Mammary epithelial cell (primary cell): ENCODE measurements at regions of chr11 and their contacts with region 1.

Region 1: GRCh38 chr11:120248551-120249278 is 8.8 kb downstream of the POU2F3 start:
- DNase-seq: peak; percentile 73
- H3K4me3 ChIP-seq: no peak overlapping the region
- H3K27ac ChIP-seq: no peak overlapping the region
- H3K4me1 ChIP-seq: peaks cover 14% of the 10 kb centered on the region
- H3K27me3 ChIP-seq: no peaks in the 10 kb centered on the region
- CTCF ChIP-seq: no peak

Region 2: DNA sequence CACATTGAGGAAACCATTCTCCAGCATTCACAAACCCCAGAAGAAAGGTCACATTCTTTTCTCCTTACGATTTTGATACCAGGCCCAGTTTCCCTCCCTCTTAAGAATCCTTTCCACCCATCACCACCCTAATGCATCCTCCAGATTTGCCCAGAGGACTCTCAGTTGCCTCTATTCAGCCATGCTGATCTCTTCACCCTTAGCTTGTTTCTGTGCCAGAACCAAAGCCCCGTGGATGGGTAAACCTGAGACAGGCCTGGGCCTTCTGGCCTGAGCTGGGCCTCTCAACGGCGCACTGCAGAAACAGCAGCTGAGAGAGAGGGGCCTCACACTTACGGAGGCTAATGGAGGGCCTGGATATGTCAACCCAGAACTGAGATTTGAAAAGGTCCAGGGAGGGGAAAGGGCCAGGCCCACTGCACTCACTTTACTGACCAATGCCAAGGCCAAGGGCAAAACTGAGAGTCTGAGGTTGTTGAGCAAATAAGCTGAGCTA is 70.1 kb before region 1 on chr11:
- CTCF ChIA-PET with region 1: no interaction called
- dilution Hi-C with region 1: loop called (anchors 5 kb)
- in situ Hi-C with region 1: no loop called
- intact Hi-C with region 1: no loop called
- DNase-seq: no peak
- H3K4me3 ChIP-seq: no peak overlapping the region
- H3K27ac ChIP-seq: no peak overlapping the region
- H3K4me1 ChIP-seq: no peaks in the 10 kb centered on the region
- H3K27me3 ChIP-seq: no peaks in the 10 kb centered on the region
- CTCF ChIP-seq: no peak

Region 3: GRCh38 chr11:121655537-121656327 is 1407.0 kb after region 1 on chr11:
- CTCF ChIA-PET with region 1: no interaction called
- dilution Hi-C with region 1: no loop called
- in situ Hi-C with region 1: no loop called
- intact Hi-C with region 1: no loop called
- DNase-seq: peak; percentile 73
- H3K4me3 ChIP-seq: peak overlapping the region; percentile 45 to 59 (median 56)
- H3K27ac ChIP-seq: peak overlapping the region; percentile 58
- H3K4me1 ChIP-seq: peaks cover 20% of the 10 kb centered on the region
- H3K27me3 ChIP-seq: no peaks in the 10 kb centered on the region
- CTCF ChIP-seq: peak; percentile 77 to 97